ENCODE measurements at regions of chr1 and their contacts with region 1.

Region 1: GRCh38 chr1:236530959-236531358 is 7.2 kb downstream of the LGALS8 start:
- DNase-seq: no peak
- H3K4me3 ChIP-seq: no peak overlapping the region
- H3K27ac ChIP-seq: no peak overlapping the region
- H3K27me3 ChIP-seq: no peaks in the 10 kb centered on the region
- CTCF ChIP-seq: no peak

Region 2: DNA sequence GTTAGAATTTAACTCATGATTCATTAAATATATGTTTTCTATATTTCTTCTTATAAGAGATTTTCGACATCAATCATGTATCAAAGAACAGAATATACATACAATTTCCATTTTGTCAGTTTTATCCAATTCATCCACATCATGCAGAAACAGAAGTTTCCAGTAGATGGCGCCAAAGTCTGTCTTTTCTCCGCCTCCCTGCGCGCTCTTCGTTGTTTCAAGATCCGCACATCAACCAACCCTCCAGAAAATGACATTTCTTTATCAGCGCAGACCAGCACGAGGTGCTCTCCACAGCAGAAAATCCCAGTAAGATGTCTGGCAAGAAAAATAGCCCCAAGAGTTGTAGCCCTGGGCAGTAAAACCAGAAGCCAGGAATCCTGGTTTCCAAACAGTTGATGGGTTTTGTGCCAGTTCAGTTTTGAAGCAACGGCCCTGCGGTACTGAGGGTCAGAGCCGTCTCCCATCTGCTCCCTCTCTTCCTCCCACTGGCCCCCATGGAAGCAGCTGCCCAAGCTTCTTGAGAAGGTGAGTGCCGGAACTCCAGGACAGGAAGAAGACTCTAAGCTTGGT is 427.2 kb before region 1 on chr1:
- CTCF ChIA-PET with region 1: interaction called, 14 read pairs
- POLR2A ChIA-PET with region 1: interaction called, 3 read pairs
- DNase-seq: no peak
- H3K4me3 ChIP-seq: no peak overlapping the region
- H3K27ac ChIP-seq: no peak overlapping the region
- H3K27me3 ChIP-seq: peaks cover 2% of the 10 kb centered on the region
- CTCF ChIP-seq: peak; percentile 84

Measured in AG04450 (cell line).